ENCODE measurements at regions of chrX and their contacts with region 1.

Region 1: DNA sequence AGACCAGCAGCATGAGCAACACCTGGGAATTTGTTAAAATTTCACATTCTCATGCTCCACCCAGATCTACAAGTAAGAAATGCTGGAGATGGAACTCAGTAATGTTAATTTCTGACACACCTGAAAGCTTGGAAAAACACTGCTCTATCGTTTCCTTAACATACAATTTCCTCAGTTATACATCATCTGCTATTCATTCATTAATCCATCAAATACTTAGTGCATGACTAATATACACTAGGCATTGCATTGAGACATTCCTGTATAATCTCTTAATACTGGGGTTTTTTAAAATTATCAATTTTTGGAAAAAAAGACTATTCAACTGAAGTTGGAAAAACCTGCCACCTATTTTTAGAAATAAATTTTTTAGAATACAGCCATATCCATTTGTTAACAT is 106.1 kb downstream of the CHM start:
- DNase-seq: no peak

Region 2: DNA sequence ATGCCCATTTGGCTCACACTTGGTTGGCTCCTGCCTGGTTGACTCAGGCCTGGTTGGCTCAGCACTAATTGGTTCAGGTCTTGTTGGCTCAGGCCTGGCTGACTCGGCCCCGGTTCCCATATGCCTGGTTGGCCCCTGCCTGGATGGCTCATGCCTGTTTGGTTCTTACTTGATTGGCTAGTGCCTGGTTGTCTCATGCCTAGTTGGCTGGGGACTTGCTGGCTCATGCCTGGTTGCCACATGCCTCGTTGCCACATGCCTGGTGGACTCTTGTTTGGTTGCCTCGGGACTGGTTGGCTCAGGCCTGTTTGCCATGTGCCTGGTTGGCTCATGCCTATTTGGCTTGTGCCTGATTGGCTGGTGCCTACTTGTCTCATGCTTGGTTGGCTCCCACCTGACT is 833.9 kb before region 1 on chrX:
- intact Hi-C with region 1: no loop called
- DNase-seq: peak; percentile 67

Region 3: GRCh38 chrX:85963736-85964135 is 22.5 kb after region 1 on chrX:
- intact Hi-C with region 1: loop called in 1 of 2 experiments (anchors 1 kb)
- DNase-seq: no peak

Measured in posterior vena cava (tissue), 2 donors.